ENCODE measurements at regions of chr17 and their contacts with region 1.

Region 1: DNA sequence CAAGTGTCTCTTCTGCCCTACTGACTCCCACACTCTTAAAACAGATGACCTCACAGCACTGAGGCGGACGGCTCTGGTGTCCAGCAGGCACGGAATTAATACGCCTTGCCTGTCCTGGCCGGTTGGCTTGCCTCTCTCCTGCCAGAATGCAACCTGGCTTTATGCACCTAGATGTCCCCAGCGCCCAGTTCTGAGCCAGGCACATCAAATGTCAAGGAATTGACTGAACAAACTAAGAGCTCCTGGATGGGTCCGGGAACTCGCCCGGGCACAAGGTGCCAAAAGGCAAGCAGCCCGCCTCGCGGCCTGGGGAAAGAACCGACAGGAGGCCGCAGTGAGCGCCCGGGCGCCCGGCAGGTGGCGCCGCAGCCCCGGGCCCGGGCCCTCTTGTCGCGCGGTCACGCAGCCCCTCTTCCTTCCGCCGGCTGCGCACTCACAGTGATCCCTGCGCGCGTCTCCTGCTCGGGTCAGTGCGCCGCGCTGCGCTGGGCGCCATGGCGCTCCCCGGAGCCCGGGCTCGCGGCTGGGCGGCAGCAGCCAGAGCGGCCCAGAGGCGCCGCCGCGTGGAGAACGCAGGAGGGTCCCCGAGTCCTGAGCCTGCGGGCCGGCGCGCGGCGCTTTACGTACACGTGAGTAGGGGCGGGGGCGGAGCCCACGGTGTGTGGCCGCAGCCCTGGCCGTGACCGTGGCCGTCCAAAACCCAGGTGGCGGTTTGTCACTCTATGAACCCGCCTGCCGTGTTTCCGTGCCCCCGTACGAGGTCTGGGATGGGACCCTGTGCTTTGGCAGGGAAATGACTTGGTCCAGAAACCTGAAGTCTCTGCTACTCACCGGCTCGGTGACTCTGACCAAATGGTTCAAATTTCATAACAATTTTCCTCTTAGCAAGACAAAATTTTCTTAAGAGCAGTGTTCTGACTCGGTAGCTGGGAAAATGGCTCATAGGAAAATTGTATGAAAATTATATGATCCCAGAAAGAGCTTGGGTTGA is at the start of gene RSAD1:
- DNase-seq: peak; percentile 96
- H3K4me3 ChIP-seq: peak within 1 kb of the TSS; percentile 93
- H3K27ac ChIP-seq: peak within 1 kb of the TSS; percentile 70
- H3K4me1 ChIP-seq: peaks cover 16% of the 10 kb centered on the region
- CTCF ChIP-seq: peak; percentile 87
- total RNA-seq, gene RSAD1: 22.6 and 25.0 TPM in 2 replicates

Region 2: DNA sequence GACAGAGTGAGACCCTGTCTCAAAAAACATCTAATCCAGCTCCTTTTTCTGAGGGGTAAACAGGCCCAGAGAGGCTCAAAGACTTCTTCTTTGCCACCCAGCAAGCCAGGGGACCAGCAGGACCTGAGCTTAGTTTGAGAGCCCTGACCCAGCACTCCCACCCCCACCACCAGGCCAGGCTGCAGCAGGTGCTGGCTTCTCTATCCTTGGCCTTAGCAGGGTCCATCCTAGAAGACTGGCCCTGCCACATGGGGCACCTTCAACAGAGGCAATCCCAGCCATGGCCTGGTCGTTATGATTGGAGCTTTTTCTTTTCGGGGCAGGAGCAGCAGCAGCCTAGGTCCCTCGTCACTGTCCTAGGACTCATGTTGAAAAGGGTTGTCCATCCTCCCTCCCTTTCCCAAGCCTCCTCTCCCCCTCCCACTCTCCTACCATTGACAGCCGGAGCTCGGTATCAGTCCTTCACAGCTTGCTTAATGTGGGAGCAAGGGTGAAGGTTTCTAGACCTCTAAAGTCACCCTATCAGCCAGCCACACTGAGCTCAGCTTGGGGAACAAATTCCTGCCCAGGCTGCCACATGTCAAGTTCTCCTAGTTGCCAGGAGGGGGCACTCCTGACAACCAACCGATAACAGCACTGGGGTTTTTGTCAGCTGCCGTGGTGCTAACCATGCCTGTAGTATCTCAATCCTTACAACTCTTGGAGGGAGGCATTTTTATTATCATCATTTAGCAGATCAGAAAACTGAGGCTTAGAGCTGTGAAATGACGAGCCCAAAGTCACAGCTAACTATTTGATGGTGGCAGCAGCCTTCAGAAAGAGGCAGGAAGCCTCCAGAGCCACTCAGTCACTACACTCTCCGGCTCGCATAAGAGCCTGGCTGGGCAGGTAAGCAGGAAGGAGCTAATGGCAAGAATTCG is 116.9 kb before region 1 on chr17:
- CTCF ChIA-PET with region 1: no interaction called
- POLR2A ChIA-PET with region 1: no interaction called
- intact Hi-C with region 1: loop called (anchors 1 kb)
- DNase-seq: peak; percentile 77
- H3K4me3 ChIP-seq: no peak overlapping the region
- H3K27ac ChIP-seq: peak overlapping the region; percentile 17
- H3K4me1 ChIP-seq: peaks cover 4% of the 10 kb centered on the region
- CTCF ChIP-seq: peak; percentile 87

Region 3: DNA sequence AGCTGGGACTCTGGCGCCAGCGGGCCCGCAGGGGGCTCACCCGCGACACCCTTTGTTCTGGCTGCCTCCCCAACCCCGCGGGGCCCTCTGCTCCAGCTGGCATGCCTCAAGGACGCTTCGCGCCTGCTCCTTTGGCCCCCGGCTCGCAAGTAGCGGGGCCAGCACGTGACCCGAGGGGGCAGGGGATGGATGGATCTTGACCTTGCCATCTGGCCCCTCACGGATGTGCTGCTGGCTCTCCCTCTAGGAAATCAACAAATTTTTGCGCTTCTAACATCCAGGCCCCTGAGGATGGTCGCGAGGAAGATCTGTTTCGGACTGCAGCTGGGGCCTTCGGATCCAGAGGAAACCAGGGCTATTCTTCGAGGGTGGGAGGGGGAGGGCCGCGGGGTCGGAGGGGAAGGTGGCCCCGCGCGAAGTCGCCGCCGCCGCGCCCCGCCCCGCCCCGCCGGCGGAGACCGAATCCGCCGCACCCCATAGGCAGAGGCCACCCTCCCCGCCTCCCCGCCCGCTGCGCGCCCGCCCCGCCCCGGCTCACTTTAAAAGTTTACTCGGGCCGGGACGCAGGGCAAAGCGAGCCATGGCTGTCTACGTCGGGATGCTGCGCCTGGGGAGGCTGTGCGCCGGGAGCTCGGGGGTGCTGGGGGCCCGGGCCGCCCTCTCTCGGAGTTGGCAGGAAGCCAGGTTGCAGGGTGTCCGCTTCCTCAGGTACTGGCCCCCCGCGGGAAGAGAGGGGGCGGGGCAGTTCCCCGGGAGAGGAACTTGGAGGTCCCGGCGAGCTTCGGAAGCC is 52.8 kb before region 1 on chr17 and contains the start of gene ACSF2:
- CTCF ChIA-PET with region 1: no interaction called
- POLR2A ChIA-PET with region 1: interaction called, 3 read pairs
- intact Hi-C with region 1: loop called (anchors 2 kb)
- DNase-seq: peak; percentile 67
- H3K4me3 ChIP-seq: peak within 1 kb of the TSS; percentile 76
- H3K27ac ChIP-seq: peak within 1 kb of the TSS; percentile 54
- H3K4me1 ChIP-seq: peaks cover 36% of the 10 kb centered on the region
- CTCF ChIP-seq: no peak
- total RNA-seq, gene ACSF2: 38.6 and 48.1 TPM in 2 replicates

Region 4: DNA sequence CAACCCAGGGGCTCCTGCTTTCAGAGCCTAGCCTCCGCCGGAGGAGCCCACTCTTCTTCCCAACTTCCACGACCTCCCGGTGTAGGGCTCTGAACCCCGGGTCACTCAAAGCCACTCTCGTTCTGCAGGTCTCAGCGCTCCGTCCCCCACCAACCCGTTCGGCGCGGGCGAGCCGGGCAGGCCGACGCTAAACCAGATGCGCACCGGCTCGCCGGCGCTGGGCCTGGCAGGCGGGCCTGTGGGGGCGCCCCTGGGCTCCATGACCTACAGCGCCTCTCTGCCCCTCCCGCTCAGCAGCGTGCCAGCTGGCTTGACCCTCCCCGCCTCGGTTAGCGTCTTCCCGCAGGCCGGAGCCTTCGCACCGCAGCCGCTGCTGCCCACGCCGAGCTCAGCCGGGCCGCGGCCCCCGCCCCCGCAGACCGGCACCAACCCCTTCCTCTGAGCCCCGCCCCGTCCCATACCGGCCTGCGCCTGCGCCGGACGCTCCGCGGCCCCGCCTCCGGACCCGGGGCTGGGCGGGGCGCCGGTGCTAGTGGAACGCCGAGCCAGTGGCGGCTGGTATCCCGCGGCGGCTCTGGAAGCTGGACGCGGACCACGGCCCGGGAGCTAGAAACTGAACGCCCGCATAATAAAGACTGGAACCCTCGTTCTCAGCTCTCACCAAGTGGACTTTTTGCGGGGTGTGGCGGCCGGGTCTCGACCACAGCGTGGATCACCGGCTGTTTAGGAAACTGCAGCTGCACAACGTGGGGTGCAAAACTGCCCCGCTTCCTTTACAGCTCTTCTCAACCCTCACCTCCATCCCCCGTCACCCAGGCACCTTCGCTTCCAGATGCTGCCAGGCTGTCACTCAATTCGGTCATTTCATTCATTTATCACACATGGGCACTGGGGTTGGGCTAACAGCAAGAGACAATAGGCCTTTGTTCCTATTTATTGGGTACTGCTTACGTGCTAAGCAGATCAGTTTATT is 63.3 kb after region 1 on chr17:
- CTCF ChIA-PET with region 1: no interaction called
- POLR2A ChIA-PET with region 1: no interaction called
- intact Hi-C with region 1: loop called (anchors 2 kb)
- DNase-seq: peak; percentile 82
- H3K4me3 ChIP-seq: peak overlapping the region; percentile 67
- H3K27ac ChIP-seq: no peak overlapping the region
- H3K4me1 ChIP-seq: peaks cover 12% of the 10 kb centered on the region
- CTCF ChIP-seq: peak; percentile 70

Region 5: DNA sequence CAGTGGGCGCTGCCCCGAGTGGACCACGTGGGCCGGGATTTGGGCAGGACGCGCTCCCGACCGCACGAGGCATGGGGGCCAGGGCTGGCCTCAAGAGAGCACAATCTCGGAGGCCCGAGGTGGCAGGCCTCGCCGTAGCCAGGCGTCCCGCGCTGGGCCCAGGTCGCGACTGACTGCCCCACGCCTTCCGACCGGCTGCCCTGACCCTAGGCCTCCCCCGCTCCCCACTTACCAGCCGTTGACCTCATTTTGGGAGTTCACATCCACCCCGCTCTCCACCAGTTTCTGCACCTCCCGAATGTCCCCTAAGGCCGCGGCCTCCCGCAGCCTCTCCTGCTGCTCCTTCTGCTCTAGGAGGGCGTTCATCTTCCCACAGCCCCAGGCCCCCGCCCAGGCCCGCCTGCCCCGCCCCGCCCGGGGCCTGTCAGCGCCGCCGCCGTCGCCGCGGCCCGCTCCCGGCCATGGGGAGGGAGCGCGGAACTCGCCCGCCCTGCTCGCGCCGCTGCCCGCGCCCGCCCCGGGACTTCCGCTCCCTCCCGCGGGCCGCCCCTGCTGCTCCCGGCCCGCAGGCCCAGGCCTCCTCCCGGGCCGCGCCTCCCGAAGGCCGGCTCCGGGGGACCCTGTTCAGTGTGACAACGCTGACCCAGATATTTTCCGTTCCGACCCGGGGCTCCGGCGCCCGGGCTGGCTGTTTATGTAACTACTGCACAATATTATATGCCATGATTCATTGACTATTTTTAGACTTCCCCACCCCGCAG is 228.8 kb after region 1 on chr17 and contains the start of gene ANKRD40:
- CTCF ChIA-PET with region 1: no interaction called
- POLR2A ChIA-PET with region 1: no interaction called
- intact Hi-C with region 1: loop called (anchors 10 kb)
- DNase-seq: peak; percentile 91
- H3K4me3 ChIP-seq: peak within 1 kb of the TSS; percentile 92
- H3K27ac ChIP-seq: peak within 1 kb of the TSS; percentile 86
- H3K4me1 ChIP-seq: peaks cover 32% of the 10 kb centered on the region
- CTCF ChIP-seq: no peak
- total RNA-seq, gene ANKRD40: 25.7 and 27.7 TPM in 2 replicates

Measured in OCI-LY7 (cell line).